B cell (primary cell): ENCODE measurements at regions of chr1 and their contacts with region 1.

Region 1: DNA sequence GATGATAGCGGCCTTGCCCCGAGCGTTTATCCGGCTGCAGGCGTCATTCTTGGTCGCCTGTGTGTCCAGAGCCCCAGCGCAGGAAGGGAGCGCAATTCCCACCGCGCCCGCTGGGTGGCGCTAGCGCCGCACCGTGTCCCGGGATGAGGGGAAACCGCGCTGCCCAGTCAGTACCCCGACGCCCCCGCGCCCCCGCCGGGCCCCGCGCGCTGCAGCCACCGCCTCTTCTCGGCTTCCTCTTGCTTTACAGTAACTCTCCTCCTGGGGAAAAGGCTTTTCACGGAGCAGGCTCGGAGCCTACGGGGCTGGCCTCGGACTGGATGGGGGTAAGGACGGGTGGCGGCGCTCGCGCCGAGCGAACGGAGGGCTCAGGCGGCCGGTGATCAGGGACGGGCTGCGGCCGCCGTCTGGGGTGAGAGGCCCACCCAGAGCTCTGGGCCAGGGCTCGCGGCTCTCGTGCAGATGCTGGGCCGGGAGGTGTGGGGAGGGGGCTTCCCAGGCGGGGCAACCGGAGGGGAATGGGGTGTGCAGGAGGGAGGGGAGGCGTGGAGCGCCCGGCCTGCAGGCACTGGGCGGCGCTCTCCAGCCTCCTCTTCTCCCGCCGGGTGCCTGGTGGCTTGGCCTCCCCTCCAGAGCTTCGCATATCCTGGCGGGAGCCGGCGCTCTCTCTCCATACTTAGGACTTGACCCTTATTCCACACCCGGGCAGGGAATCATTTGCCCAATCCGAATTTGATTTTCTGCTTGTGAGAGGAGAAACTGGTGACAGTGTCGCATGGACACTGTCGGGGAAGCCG is 29.8 kb downstream of the TEX35 start:
- DNase-seq: peak; percentile 93
- ATAC-seq: peak; percentile 80
- H3K4me3 ChIP-seq: peak overlapping the region; percentile 84 to 90 (median 88)
- H3K4me3 Mint-ChIP-seq: peak overlapping the region; percentile 99
- H3K27ac ChIP-seq: peak overlapping the region; percentile 55 to 61
- H3K27ac Mint-ChIP-seq: peak overlapping the region; percentile 98
- H3K4me1 ChIP-seq: peaks cover 36 to 46% of the 10 kb centered on the region in 2 donors
- H3K4me1 Mint-ChIP-seq: peaks cover 50% of the 10 kb centered on the region
- H3K27me3 ChIP-seq: no peaks in the 10 kb centered on the region
- H3K27me3 Mint-ChIP-seq: no peaks in the 10 kb centered on the region
- CTCF ChIP-seq: peak; percentile 99

Region 2: GRCh38 chr1:178294654-178295053 is 248.1 kb before region 1 on chr1:
- CTCF ChIA-PET with region 1: no interaction called
- POLR2A ChIA-PET with region 1: no interaction called
- intact Hi-C with region 1: no loop called
- DNase-seq: no peak
- ATAC-seq: no peak
- H3K4me3 ChIP-seq: no peak overlapping the region
- H3K4me3 Mint-ChIP-seq: no peak overlapping the region
- H3K27ac ChIP-seq: no peak overlapping the region
- H3K27ac Mint-ChIP-seq: no peak overlapping the region
- H3K4me1 ChIP-seq: no peaks in the 10 kb centered on the region
- H3K4me1 Mint-ChIP-seq: no peaks in the 10 kb centered on the region
- H3K27me3 ChIP-seq: no peaks in the 10 kb centered on the region
- H3K27me3 Mint-ChIP-seq: peaks cover 14% of the 10 kb centered on the region
- CTCF ChIP-seq: no peak

Region 3: GRCh38 chr1:178575611-178576331 is 33.0 kb after region 1 on chr1:
- CTCF ChIA-PET with region 1: interaction called, 64 read pairs
- POLR2A ChIA-PET with region 1: interaction called, 20 read pairs
- intact Hi-C with region 1: no loop called
- DNase-seq: peak; percentile 85
- ATAC-seq: peak; percentile 36
- H3K4me3 ChIP-seq: peak overlapping the region in 3 of 5 experiments; percentile 0 to 39 (median 2)
- H3K4me3 Mint-ChIP-seq: peak overlapping the region; percentile 75
- H3K27ac ChIP-seq: peak overlapping the region; percentile 95 to 97
- H3K27ac Mint-ChIP-seq: peak overlapping the region; percentile 93
- H3K4me1 ChIP-seq: peaks cover 79 to 88% of the 10 kb centered on the region in 2 donors
- H3K4me1 Mint-ChIP-seq: peaks cover 81% of the 10 kb centered on the region
- H3K27me3 ChIP-seq: no peaks in the 10 kb centered on the region
- H3K27me3 Mint-ChIP-seq: no peaks in the 10 kb centered on the region
- CTCF ChIP-seq: no peak

Region 4: GRCh38 chr1:178664278-178664677 is 121.5 kb after region 1 on chr1:
- CTCF ChIA-PET with region 1: interaction called, 19 read pairs
- POLR2A ChIA-PET with region 1: interaction called, 7 read pairs
- intact Hi-C with region 1: loop called (anchors 1 kb)
- DNase-seq: peak; percentile 82
- ATAC-seq: peak; percentile 89
- H3K4me3 ChIP-seq: peak overlapping the region in 2 of 5 experiments; percentile 13 to 17
- H3K4me3 Mint-ChIP-seq: peak overlapping the region; percentile 47
- H3K27ac ChIP-seq: peak overlapping the region; percentile 70 to 84
- H3K27ac Mint-ChIP-seq: peak overlapping the region; percentile 84
- H3K4me1 ChIP-seq: peaks cover 80 to 92% of the 10 kb centered on the region in 2 donors
- H3K4me1 Mint-ChIP-seq: peaks cover 83% of the 10 kb centered on the region
- H3K27me3 ChIP-seq: no peaks in the 10 kb centered on the region
- H3K27me3 Mint-ChIP-seq: no peaks in the 10 kb centered on the region
- CTCF ChIP-seq: no peak

Region 5: DNA sequence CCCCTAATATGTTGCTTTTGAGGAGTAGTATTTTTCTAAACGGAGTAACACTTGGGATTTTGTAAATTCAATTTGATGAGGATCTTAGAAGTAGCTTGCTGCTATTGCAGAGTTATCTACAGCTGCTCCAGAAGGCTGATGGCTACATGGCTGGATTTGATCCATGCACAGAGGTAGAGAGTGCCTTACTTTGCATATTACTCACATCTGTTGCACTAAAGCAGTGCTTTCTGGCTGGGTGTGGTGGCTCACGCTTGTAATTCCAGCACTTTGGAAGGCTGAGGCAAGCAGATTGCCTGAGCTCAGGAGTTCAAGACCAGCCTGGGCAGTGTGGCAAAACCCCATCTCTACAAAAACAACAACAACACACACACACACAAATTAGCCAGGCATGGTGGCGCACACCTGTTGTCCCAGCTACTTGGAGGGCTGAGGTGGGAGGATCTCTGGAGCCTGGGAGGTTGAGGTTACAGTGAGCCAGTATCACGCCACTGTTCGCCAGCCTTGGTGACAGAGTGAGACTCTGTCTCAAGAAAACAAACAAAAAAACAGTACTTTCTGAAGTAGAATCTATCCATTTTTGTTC is 206.9 kb after region 1 on chr1:
- CTCF ChIA-PET with region 1: interaction called, 33 read pairs
- POLR2A ChIA-PET with region 1: interaction called, 6 read pairs
- intact Hi-C with region 1: loop called (anchors 1 kb)
- DNase-seq: no peak
- ATAC-seq: no peak
- H3K4me3 ChIP-seq: no peak overlapping the region
- H3K4me3 Mint-ChIP-seq: peak overlapping the region; percentile 19
- H3K27ac ChIP-seq: peak overlapping the region in 1 of 2 donors; percentile 78
- H3K27ac Mint-ChIP-seq: peak overlapping the region; percentile 56
- H3K4me1 ChIP-seq: peaks cover 31 to 36% of the 10 kb centered on the region in 2 donors
- H3K4me1 Mint-ChIP-seq: peaks cover 65% of the 10 kb centered on the region
- H3K27me3 ChIP-seq: no peaks in the 10 kb centered on the region
- H3K27me3 Mint-ChIP-seq: no peaks in the 10 kb centered on the region
- CTCF ChIP-seq: no peak

Region 6: DNA sequence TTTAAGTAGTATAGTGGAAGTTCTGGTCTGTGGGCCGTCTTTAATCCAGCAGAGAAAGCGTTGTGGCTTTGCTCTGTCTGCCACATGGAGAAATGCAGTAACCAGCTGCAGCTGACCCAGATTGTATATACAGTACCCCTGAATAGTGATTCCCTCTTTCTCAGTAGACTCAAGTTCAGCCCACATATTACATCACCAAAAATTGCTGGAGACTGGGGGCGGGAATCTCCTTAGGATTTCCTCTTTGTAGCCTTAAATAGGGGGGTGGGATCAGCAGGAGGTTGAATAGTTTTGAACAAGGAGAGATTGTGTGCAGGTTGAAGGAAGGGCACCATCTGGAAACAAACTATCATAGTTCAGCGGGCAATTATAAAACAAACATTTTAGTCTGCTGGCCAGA is 328.2 kb after region 1 on chr1 and contains the start of gene ANGPTL1:
- CTCF ChIA-PET with region 1: interaction called, 15 read pairs
- POLR2A ChIA-PET with region 1: no interaction called
- intact Hi-C with region 1: loop called (anchors 5 kb)
- DNase-seq: no peak
- ATAC-seq: no peak
- H3K4me3 ChIP-seq: no peak within 1 kb of the TSS
- H3K4me3 Mint-ChIP-seq: no peak within 1 kb of the TSS
- H3K27ac ChIP-seq: peak within 1 kb of the TSS in 1 of 2 donors; percentile 73
- H3K27ac Mint-ChIP-seq: peak within 1 kb of the TSS; percentile 85
- H3K4me1 ChIP-seq: peaks cover 0 to 13% of the 10 kb centered on the region in 2 donors
- H3K4me1 Mint-ChIP-seq: peaks cover 43% of the 10 kb centered on the region
- H3K27me3 ChIP-seq: no peaks in the 10 kb centered on the region
- H3K27me3 Mint-ChIP-seq: no peaks in the 10 kb centered on the region
- CTCF ChIP-seq: no peak
- total RNA-seq, gene ANGPTL1: not detected in 2 replicates

Region 7: GRCh38 chr1:179025125-179025974 is 482.6 kb after region 1 on chr1 and contains the start of gene FAM20B:
- CTCF ChIA-PET with region 1: no interaction called
- POLR2A ChIA-PET with region 1: interaction called, 16 read pairs
- intact Hi-C with region 1: no loop called
- DNase-seq: peak; percentile 95
- ATAC-seq: peak; percentile 80
- H3K4me3 ChIP-seq: peak within 1 kb of the TSS; percentile 77 to 97 (median 87)
- H3K4me3 Mint-ChIP-seq: peak within 1 kb of the TSS; percentile 97
- H3K27ac ChIP-seq: peak within 1 kb of the TSS; percentile 92 to 95
- H3K27ac Mint-ChIP-seq: peak within 1 kb of the TSS; percentile 95
- H3K4me1 ChIP-seq: peaks cover 29 to 36% of the 10 kb centered on the region in 2 donors
- H3K4me1 Mint-ChIP-seq: peaks cover 45% of the 10 kb centered on the region
- H3K27me3 ChIP-seq: no peaks in the 10 kb centered on the region
- H3K27me3 Mint-ChIP-seq: no peaks in the 10 kb centered on the region
- CTCF ChIP-seq: no peak
- total RNA-seq, gene FAM20B: 28.5 and 32.8 TPM in 2 replicates